HCT116 (cell line): ENCODE measurements at regions of chr7 and their contacts with region 1.

Region 1: GRCh38 chr7:95690367-95690947 is 81.9 kb upstream of the DYNC1I1 start:
- DNase-seq: peak; percentile 52
- ATAC-seq: peak; percentile 75
- H3K4me3 ChIP-seq: no peak overlapping the region
- H3K27ac ChIP-seq: no peak overlapping the region
- H3K4me1 ChIP-seq: no peaks in the 10 kb centered on the region
- H3K27me3 ChIP-seq: no peaks in the 10 kb centered on the region
- CTCF ChIP-seq: peak; percentile 43 to 94 (median 80)
- POLR2A ChIP-seq: no peak
- RAD21 ChIP-seq: peak; percentile 58

Region 2: GRCh38 chr7:94289071-94289470 is 1401.4 kb before region 1 on chr7:
- CTCF ChIA-PET with region 1: interaction called, 27 read pairs
- POLR2A ChIA-PET with region 1: interaction called, 3 read pairs
- RAD21 ChIA-PET with region 1: no interaction called
- intact Hi-C with region 1: loop called (anchors 2 kb)
- DNase-seq: peak; percentile 81
- ATAC-seq: peak; percentile 100
- H3K4me3 ChIP-seq: no peak overlapping the region
- H3K27ac ChIP-seq: no peak overlapping the region
- H3K4me1 ChIP-seq: no peaks in the 10 kb centered on the region
- H3K27me3 ChIP-seq: no peaks in the 10 kb centered on the region
- CTCF ChIP-seq: peak; percentile 92 to 98 (median 98)
- POLR2A ChIP-seq: no peak
- RAD21 ChIP-seq: peak; percentile 99

Region 3: GRCh38 chr7:94449148-94449725 is 1241.2 kb before region 1 on chr7:
- CTCF ChIA-PET with region 1: interaction called, 11 read pairs
- POLR2A ChIA-PET with region 1: no interaction called
- RAD21 ChIA-PET with region 1: no interaction called
- intact Hi-C with region 1: loop called (anchors 2 kb)
- DNase-seq: peak; percentile 32
- ATAC-seq: no peak
- H3K4me3 ChIP-seq: no peak overlapping the region
- H3K27ac ChIP-seq: no peak overlapping the region
- H3K4me1 ChIP-seq: no peaks in the 10 kb centered on the region
- H3K27me3 ChIP-seq: no peaks in the 10 kb centered on the region
- CTCF ChIP-seq: peak; percentile 46 to 79 (median 73); a peak in 5 of 6 replicates
- POLR2A ChIP-seq: no peak
- RAD21 ChIP-seq: peak; percentile 86

Region 4: GRCh38 chr7:95330204-95330960 is 360.1 kb before region 1 on chr7:
- CTCF ChIA-PET with region 1: no interaction called
- POLR2A ChIA-PET with region 1: no interaction called
- RAD21 ChIA-PET with region 1: no interaction called
- intact Hi-C with region 1: no loop called
- DNase-seq: no peak
- ATAC-seq: no peak
- H3K4me3 ChIP-seq: no peak overlapping the region
- H3K27ac ChIP-seq: no peak overlapping the region
- H3K4me1 ChIP-seq: no peaks in the 10 kb centered on the region
- H3K27me3 ChIP-seq: no peaks in the 10 kb centered on the region
- CTCF ChIP-seq: no peak
- POLR2A ChIP-seq: no peak
- RAD21 ChIP-seq: no peak

Region 5: GRCh38 chr7:95491634-95492320 is 198.7 kb before region 1 on chr7:
- CTCF ChIA-PET with region 1: interaction called, 12 read pairs
- POLR2A ChIA-PET with region 1: no interaction called
- RAD21 ChIA-PET with region 1: no interaction called
- intact Hi-C with region 1: no loop called
- DNase-seq: peak; percentile 94
- ATAC-seq: peak; percentile 95
- H3K4me3 ChIP-seq: peak overlapping the region in 1 of 2 experiments; percentile 27; a peak in 3 of 4 replicates
- H3K27ac ChIP-seq: peak overlapping the region; percentile 15; the same call in 1 of the 2 replicates
- H3K4me1 ChIP-seq: peaks cover 20 to 30% of the 10 kb centered on the region in 2 experiments
- H3K27me3 ChIP-seq: no peaks in the 10 kb centered on the region
- CTCF ChIP-seq: no peak
- POLR2A ChIP-seq: no peak
- RAD21 ChIP-seq: no peak

Region 6: DNA sequence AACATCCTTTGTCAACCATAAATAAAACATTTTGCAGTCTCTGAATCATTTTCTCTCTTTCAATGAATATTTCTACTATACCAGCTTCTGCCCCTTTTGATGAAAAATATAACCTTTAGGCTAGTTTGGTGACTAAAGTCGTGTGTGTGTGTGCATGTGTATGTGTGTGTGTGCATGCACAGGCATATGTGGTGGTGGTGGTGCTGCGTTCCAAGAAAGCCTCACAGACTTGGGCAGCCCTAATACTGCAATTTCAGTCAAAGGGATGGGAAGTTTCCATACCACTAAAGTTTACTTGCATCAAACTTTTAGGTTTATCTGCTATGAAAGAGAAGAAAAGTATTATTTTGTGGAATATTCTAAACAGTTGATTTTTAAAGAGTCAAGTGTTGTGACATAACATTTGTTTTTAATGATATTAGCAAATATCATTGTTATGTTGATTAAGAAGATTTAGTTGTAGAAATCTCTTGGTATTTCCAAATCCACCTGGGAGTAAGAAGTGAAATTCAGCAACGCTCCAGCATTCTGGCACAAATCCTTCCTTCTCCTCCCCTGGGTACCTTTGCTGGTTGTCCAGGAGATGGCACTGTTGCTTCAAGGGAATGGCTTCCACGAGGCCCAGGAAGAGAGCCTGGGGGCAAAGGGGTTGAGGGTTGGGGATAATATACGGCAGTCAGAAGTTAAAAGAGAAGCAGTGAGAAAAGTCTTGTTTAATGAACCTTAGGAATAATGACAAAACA is 163.3 kb before region 1 on chr7:
- CTCF ChIA-PET with region 1: interaction called, 226 read pairs
- POLR2A ChIA-PET with region 1: interaction called, 5 read pairs
- RAD21 ChIA-PET with region 1: interaction called, 4 to 9 read pairs
- intact Hi-C with region 1: loop called (anchors 1 kb)
- DNase-seq: peak; percentile 50
- ATAC-seq: peak; percentile 95
- H3K4me3 ChIP-seq: no peak overlapping the region
- H3K27ac ChIP-seq: no peak overlapping the region
- H3K4me1 ChIP-seq: no peaks in the 10 kb centered on the region; a peak in 1 of 4 replicates
- H3K27me3 ChIP-seq: no peaks in the 10 kb centered on the region
- CTCF ChIP-seq: peak; percentile 90 to 95 (median 94)
- POLR2A ChIP-seq: no peak
- RAD21 ChIP-seq: peak; percentile 97

Region 7: GRCh38 chr7:95847061-95847460 is 156.6 kb after region 1 on chr7:
- CTCF ChIA-PET with region 1: no interaction called
- POLR2A ChIA-PET with region 1: no interaction called
- RAD21 ChIA-PET with region 1: no interaction called
- intact Hi-C with region 1: no loop called
- DNase-seq: no peak
- ATAC-seq: no peak
- H3K4me3 ChIP-seq: no peak overlapping the region
- H3K27ac ChIP-seq: no peak overlapping the region
- H3K4me1 ChIP-seq: no peaks in the 10 kb centered on the region
- H3K27me3 ChIP-seq: peaks cover 5% of the 10 kb centered on the region
- CTCF ChIP-seq: no peak
- POLR2A ChIP-seq: no peak
- RAD21 ChIP-seq: no peak

Region 8: DNA sequence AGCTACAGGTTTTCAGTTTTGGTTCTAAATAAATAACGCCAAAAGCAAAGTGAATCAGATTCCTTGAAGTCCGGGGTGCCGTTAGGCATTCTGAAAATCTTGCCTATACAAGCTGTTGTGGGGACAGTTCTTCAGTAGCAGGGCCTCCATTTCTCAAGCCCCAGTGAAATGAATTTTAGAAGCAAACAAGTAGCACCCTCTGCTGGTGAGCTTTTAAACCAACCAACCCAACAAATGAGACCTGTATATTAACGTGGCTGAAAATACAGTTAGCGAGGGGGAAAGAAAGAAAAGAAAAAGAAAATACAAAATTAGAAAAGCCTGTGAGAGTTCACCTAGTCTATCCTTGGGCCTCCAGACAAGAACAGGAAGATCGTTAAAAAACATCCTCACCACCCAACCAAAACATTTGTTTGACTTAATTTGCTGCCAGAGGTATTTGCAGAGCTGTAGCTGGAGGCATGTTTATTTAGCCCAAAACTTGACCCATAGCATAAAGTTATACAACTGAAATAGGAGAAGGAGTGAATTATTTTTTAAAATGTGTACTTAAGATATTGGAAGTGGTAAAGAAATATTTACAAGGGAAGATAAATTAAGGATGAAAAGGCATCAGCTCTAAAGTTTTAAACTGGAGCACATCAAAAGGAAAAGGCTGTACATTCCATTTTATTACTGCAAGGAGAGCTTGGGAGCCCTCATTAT is 180.8 kb after region 1 on chr7:
- CTCF ChIA-PET with region 1: interaction called, 13 read pairs
- POLR2A ChIA-PET with region 1: no interaction called
- RAD21 ChIA-PET with region 1: interaction called in 1 of 2 experiments, 4 read pairs
- intact Hi-C with region 1: no loop called
- DNase-seq: peak; percentile 29
- ATAC-seq: peak; percentile 73
- H3K4me3 ChIP-seq: no peak overlapping the region
- H3K27ac ChIP-seq: no peak overlapping the region
- H3K4me1 ChIP-seq: no peaks in the 10 kb centered on the region
- H3K27me3 ChIP-seq: peaks cover 10% of the 10 kb centered on the region
- CTCF ChIP-seq: peak; percentile 61 to 76 (median 66); a peak in 5 of 6 replicates
- POLR2A ChIP-seq: no peak
- RAD21 ChIP-seq: peak; percentile 73